ENCODE measurements at regions of chr17 and their contacts with region 1.

Region 1: DNA sequence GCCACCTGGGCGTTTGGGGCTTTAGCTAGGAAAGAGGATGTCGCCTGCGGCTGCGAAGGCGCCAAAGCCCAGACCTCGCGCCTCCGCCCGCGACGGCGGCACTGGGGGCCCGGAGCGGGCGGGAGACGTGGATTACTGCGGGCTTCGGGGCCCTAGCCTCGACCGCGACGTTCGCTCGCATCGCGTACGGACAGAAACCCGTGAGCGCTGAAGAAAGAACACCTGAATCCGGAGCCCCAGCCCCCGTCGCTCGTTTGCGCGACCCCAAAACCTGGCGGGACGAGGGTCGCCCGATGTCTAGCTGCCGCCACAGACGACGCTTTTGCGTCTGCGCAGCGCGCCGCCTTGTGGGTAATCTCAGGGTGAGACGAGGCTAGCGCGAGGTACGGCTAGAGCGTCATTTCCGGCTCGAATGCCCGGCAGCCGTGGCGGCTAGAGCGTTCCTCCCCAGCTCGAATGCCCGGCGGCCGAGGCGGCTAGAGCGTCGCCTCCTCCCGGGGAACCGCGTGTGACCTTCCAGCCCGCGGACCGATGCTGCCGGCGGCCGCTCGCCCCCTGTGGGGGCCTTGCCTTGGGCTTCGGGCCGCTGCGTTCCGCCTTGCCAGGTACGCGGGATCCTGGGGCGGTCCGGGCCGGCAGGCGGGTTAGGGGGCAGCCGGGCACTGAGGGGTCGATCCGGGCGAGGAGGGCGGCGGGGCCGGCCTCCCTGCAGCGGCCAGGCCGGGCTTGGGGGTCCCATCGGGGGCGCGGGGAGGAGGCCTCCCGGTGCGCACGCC is at the start of gene MRPL12:
- DNase-seq: peak; percentile 33
- H3K4me3 ChIP-seq: peak within 1 kb of the TSS; percentile 86
- CTCF ChIP-seq: peak; percentile 12

Region 2: GRCh38 chr17:80997424-80997841 is 705.7 kb before region 1 on chr17:
- CTCF ChIA-PET with region 1: no interaction called
- POLR2A ChIA-PET with region 1: no interaction called
- DNase-seq: no peak
- H3K4me3 ChIP-seq: no peak overlapping the region
- CTCF ChIP-seq: no peak

Region 3: DNA sequence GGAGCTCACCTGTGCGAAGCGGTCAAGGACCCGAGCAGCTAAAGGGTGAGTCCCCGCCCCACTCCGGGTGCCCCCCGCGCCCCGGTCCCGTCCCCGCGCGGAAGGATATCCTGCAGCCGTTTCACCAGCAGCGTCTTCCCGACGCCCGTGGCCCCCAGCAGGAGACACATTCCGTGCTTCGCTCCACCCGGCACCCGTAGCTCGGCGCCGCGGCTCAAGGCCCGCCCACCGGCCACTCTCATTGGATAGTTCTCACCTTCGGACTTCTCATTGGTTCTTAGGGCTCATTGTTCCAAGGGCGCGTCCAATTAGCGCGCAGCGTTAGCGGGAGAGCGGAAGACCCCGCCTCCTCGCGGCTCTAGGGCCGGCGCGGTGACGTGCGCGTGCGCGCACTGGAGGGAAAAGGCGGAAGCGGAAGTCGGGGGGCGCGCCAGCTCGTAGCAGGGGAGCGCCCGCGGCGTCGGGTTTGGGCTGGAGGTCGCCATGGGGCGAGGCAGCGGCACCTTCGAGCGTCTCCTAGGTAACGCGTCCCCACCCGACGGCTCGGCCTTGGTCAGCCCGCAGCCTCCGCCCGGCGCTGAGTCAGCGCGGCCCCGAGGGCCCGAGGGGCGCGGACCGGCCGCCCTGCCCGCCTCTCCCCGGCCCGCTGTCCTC is 19.4 kb before region 1 on chr17 and contains the starts of genes ARL16 and HGS:
- CTCF ChIA-PET with region 1: interaction called, 5 read pairs
- POLR2A ChIA-PET with region 1: interaction called, 26 read pairs
- DNase-seq: peak; percentile 96
- H3K4me3 ChIP-seq: peak within 1 kb of the TSS; percentile 89
- CTCF ChIP-seq: no peak

Measured in AG04449 (cell line).